Heart right ventricle (tissue), 16 donors: ENCODE measurements at regions of chr10 and their contacts with region 1.

Region 1: GRCh38 chr10:44959247-44960087 is at the start of gene RASSF4:
- DNase-seq: peak; percentile 94 to 97
- ATAC-seq: peak; percentile 88 to 95 (median 93)
- H3K4me3 ChIP-seq: peak within 1 kb of the TSS; percentile 65 to 92 (median 74)
- H3K27ac ChIP-seq: peak within 1 kb of the TSS; percentile 89 to 98 (median 94)
- H3K4me1 ChIP-seq: peaks cover 23 to 84% (median 81%) of the 10 kb centered on the region in 9 donors
- H3K27me3 ChIP-seq: no peaks in the 10 kb centered on the region
- CTCF ChIP-seq: peak in 1 of 9 donors; percentile 2
- total RNA-seq, gene RASSF4: 73.3 to 120 (median 79.9) TPM

Region 2: DNA sequence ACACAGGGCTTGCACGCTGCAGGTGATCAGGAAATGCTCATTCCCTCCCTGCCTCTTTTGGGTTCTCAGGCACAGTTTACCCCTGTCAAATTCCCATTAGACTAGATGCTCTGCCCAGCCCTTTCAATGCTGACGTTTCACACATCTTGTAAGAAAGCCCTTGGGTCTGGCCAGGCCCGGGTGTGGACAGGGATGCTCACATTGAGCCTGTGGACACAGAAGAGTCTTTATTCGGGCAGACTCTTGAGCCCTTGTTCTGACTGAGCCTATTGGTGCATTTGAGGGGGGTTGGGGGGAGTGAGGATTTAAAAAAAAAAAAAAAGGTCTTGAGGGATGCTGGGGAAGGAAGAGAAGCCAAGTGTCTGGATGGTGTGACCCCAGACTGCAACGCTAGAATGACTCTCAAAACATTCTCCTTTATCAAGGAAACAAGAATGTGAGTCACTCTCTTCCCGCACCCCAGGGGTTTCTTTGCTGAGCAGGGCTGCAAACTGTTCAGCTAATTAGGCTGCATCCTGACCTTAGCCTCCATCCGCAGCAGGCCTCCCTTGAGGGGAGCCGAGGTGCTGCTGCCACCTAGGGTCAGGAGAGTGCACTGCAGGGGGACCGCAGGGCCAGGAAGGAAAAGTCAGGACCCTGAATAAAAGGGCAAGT is 102.0 kb before region 1 on chr10:
- intact Hi-C with region 1: no loop called
- DNase-seq: peak; percentile 78 to 79
- ATAC-seq: peak; percentile 73 to 91 (median 86)
- H3K4me3 ChIP-seq: no peak overlapping the region
- H3K27ac ChIP-seq: peak overlapping the region in 1 of 10 donors; percentile 3
- H3K4me1 ChIP-seq: peaks cover 0 to 28% (median 0%) of the 10 kb centered on the region in 9 donors
- H3K27me3 ChIP-seq: peaks cover 0 to 8% (median 0%) of the 10 kb centered on the region in 7 donors
- CTCF ChIP-seq: peak; percentile 95 to 100 (median 98)

Region 3: DNA sequence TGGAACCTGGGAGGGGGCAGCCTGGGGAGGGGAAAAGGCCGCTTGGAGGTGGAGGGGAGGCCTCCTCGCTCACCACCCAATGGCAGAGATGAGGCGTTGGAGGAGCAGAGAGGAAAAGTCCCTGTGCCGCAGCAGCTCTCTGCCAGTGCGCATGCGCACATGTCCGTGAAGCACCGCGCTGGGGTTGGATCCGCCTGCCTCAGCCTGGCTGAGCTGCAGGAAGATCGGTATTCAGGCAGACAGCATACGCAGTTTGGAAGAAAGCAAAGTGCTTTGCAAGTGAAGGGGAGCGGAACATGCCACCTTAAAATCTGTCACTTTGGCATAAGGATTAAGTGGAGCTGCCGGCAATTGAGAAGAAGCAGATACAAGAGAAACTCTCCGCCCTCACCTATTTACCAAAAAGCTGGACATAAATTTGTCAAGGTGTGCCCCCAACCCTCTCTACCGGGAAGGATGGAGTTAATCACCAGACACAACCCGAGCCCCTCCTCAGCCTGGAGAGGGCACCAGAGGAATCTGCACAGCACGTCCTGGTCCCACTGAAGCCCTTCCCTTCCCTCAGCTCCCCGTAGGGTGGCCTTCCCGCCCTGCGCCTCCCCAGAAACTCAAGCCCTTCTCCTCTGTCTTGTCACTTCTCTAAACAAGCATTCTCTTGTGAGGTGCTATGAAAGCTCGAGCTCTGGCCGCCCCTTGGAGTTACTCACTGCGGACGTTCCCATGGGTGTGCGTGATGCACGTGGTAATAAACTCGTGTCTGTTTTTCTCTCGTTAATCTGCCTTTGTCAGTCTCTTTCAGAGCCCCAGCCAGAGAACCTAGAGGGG is 80.5 kb before region 1 on chr10:
- intact Hi-C with region 1: loop called in 1 of 10 experiments (anchors 2 kb)
- DNase-seq: peak; percentile 86 to 91
- ATAC-seq: peak; percentile 90 to 97 (median 95)
- H3K4me3 ChIP-seq: peak overlapping the region in 9 of 10 donors; percentile 35 to 61 (median 52)
- H3K27ac ChIP-seq: peak overlapping the region in 9 of 10 donors; percentile 11 to 72 (median 60)
- H3K4me1 ChIP-seq: peaks cover 0 to 34% (median 16%) of the 10 kb centered on the region in 9 donors
- H3K27me3 ChIP-seq: peaks cover 0 to 6% (median 0%) of the 10 kb centered on the region in 7 donors
- CTCF ChIP-seq: peak in 6 of 9 donors; percentile 10 to 39 (median 22)